GM12878 (cell line): ENCODE measurements at regions of chrX and their contacts with region 1.

Region 1: DNA sequence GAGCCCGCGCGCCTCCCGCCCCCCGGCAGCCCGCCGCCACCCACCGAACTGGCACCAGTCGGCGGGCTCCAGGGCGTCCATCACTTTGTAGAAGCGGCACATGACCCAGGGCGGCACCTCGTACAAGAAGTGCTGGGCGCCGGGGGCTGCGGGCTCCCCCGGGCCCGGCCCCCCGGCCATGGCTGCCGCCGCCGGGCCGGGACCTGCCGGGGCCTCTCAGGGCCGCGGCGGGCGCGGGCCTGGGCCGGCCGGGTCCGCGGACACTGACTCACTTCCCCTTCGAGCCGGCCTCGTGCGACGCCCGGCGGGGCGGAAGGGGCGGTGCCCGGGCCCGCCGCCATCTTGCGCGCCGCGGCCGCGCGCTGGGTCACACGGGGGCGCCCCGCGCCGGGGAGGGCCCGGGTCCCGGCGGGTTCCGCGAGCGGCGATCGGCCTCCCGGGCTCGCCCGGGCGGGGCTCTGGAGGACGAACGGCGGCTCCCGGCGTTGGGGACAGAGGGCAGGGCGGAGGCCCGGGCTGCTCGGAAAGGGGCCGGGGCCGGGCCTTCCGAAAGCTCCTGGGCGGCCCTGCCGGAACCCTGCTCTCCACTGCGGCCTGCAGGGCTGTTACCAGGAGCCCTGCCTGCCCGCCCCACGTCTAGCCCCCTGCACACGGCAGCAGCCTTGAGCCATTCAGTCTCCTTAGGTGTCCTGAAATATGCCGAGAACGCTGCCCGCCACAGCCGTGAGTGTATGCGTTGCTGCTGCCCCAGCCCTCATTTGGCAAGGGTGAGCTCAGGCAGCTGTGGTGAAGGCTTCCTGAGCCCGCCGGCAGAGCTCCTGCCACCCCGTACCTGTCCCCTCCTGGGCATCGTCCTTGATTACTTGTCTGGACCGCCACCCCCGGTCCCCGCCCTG is at the start of gene IRAK1:
- DNase-seq: no peak
- ATAC-seq: peak; percentile 69
- H3K4me3 ChIP-seq: peak within 1 kb of the TSS; percentile 85
- H3K27ac ChIP-seq: peak within 1 kb of the TSS; percentile 82
- H3K4me1 ChIP-seq: peaks cover 11% of the 10 kb centered on the region
- H3K27me3 ChIP-seq: no peaks in the 10 kb centered on the region
- CTCF ChIP-seq: no peak; a peak in 1 of 6 replicates
- EP300 ChIP-seq: no peak
- POLR2A ChIP-seq: peak; percentile 64
- RAD21 ChIP-seq: no peak
- polyA plus RNA-seq, gene IRAK1: 4.2 to 15.1 TPM

Region 2: DNA sequence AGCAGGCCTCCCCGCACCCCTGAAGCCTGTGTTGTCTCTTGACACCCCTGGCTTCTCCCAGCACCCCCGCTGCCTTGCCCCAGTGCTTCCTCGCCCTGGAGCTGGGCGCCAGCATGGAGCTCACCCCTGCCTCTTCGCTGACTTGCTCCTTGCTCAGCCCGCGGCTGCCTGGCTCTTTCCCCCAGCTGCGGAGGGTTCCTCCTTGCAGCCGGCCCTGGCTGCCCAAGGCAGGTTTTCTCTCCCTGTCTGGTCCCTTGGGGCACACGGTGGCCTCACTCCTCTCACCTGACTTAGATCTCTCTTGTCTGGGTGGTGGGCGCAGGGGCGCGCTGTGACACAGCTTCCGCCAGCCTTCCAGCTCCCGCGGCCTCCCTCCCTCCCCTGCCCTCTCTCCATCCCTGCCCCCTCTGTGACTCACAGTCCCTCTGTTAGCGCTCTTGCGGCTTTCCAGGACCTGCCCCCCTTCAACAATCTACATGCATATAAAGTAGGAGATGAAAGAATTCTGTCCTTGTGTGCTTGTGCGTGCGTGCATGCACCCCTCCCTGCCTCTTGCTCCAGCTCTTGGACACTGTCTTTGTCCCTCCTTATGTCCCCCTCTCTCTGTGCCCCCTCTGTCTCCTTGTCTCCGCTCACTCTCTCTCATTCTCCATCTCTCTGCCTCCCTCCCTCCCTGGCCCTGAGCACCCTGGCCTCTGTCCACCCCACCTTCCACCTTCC is 253.6 kb before region 1 on chrX:
- CTCF ChIA-PET with region 1: no interaction called
- POLR2A ChIA-PET with region 1: no interaction called
- RAD21 ChIA-PET with region 1: no interaction called
- SMC1A ChIA-PET with region 1: no interaction called
- in situ Hi-C with region 1: no loop called
- intact Hi-C with region 1: no loop called
- DNase-seq: no peak
- ATAC-seq: no peak; the same call in 2 of the 3 replicates
- H3K4me3 ChIP-seq: no peak overlapping the region
- H3K27ac ChIP-seq: no peak overlapping the region
- H3K4me1 ChIP-seq: no peaks in the 10 kb centered on the region
- H3K27me3 ChIP-seq: no peaks in the 10 kb centered on the region
- CTCF ChIP-seq: no peak
- EP300 ChIP-seq: no peak
- POLR2A ChIP-seq: no peak
- RAD21 ChIP-seq: no peak

Region 3: DNA sequence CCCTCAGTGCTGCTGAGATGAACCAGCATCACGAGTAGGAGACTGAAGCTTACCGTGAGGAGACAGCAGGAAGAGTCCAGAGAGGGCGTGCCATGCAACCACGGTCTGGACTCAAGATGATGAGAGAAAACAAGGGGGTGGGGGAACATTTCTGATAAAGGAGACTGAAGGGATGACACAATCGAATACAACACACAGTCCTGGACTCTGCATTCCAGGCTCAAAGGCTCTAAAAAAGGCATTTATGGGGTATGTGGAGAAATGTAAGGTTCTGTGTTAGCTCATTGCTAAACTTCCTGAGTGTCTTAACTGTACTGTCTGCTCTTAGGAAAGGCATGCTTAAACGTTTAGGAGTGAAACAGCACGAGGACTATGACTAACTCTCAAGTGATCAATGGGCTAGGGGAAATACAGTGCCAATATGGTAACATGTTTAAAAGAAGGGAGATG is 20.5 kb after region 1 on chrX:
- CTCF ChIA-PET with region 1: interaction called, 3 read pairs
- POLR2A ChIA-PET with region 1: interaction called, 5 read pairs
- RAD21 ChIA-PET with region 1: interaction called, 10 read pairs
- SMC1A ChIA-PET with region 1: interaction called, 4 read pairs
- in situ Hi-C with region 1: no loop called
- intact Hi-C with region 1: no loop called
- DNase-seq: no peak
- ATAC-seq: peak; percentile 61
- H3K4me3 ChIP-seq: no peak overlapping the region
- H3K27ac ChIP-seq: no peak overlapping the region
- H3K4me1 ChIP-seq: no peaks in the 10 kb centered on the region
- H3K27me3 ChIP-seq: no peaks in the 10 kb centered on the region
- CTCF ChIP-seq: no peak
- EP300 ChIP-seq: no peak
- POLR2A ChIP-seq: no peak
- RAD21 ChIP-seq: no peak

Region 4: GRCh38 chrX:154116426-154117211 is 96.7 kb after region 1 on chrX:
- CTCF ChIA-PET with region 1: no interaction called
- POLR2A ChIA-PET with region 1: no interaction called
- RAD21 ChIA-PET with region 1: no interaction called
- SMC1A ChIA-PET with region 1: no interaction called
- in situ Hi-C with region 1: no loop called
- intact Hi-C with region 1: no loop called
- DNase-seq: no peak
- ATAC-seq: no peak
- H3K4me3 ChIP-seq: no peak overlapping the region
- H3K27ac ChIP-seq: no peak overlapping the region
- H3K4me1 ChIP-seq: no peaks in the 10 kb centered on the region
- H3K27me3 ChIP-seq: no peaks in the 10 kb centered on the region; a peak in 2 of 4 replicates
- CTCF ChIP-seq: no peak
- EP300 ChIP-seq: no peak
- POLR2A ChIP-seq: no peak
- RAD21 ChIP-seq: no peak